ENCODE measurements at regions of chr17 and their contacts with region 1.

Region 1: DNA sequence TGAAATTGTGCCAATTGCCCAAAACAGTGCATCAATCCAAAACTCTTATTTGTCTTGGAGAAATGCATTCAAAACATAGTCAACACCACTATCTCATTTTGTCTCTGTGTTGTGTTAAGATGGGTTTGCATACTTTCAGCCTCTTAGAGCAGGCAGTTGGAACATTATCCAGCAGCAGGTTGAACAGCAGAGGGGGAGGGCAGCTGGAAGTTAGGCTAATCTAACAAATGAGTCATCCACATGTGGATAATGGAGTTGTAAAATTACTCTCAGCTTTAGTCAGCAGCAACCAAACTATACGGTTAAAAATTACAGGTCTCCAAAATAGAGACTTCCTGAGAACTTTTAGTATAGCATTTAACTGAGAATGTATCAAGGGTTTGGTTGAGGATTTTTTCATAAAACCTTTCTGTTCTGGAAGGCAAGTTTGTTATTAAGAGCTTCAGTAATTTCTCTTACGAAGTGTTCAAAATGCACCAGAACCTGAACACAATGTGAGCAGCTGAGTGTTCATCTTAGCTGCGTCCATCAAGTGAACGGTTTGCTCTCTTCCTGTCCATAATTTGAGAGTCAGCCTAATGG is 46.3 kb downstream of the PRKCA start:
- DNase-seq: no peak
- H3K4me3 Mint-ChIP-seq: peak overlapping the region; percentile 62
- H3K27ac Mint-ChIP-seq: peak overlapping the region; percentile 45
- H3K4me1 Mint-ChIP-seq: peaks cover 62% of the 10 kb centered on the region
- H3K27me3 Mint-ChIP-seq: no peaks in the 10 kb centered on the region

Region 2: DNA sequence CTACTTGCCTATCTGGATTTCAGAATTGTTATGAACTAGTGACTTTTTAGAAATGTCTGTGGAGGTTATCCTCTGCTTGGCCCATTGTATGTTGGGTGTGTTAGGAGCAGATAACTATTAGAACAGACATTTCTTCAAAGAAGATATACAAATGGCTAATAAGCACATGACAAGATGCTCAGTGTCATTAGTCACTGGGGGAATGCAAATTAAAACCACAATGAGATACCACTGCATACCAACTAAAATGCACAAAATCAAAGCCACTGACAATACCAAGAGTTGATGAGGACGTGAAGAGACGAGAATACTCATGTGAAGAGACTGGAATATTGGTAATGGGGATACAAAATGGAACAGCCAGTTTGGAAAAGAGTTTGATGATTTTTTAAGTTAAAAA is 195.9 kb before region 1 on chr17:
- intact Hi-C with region 1: no loop called
- DNase-seq: no peak
- H3K4me3 Mint-ChIP-seq: no peak overlapping the region
- H3K27ac Mint-ChIP-seq: no peak overlapping the region
- H3K4me1 Mint-ChIP-seq: peaks cover 12% of the 10 kb centered on the region
- H3K27me3 Mint-ChIP-seq: peaks cover 3% of the 10 kb centered on the region

Region 3: DNA sequence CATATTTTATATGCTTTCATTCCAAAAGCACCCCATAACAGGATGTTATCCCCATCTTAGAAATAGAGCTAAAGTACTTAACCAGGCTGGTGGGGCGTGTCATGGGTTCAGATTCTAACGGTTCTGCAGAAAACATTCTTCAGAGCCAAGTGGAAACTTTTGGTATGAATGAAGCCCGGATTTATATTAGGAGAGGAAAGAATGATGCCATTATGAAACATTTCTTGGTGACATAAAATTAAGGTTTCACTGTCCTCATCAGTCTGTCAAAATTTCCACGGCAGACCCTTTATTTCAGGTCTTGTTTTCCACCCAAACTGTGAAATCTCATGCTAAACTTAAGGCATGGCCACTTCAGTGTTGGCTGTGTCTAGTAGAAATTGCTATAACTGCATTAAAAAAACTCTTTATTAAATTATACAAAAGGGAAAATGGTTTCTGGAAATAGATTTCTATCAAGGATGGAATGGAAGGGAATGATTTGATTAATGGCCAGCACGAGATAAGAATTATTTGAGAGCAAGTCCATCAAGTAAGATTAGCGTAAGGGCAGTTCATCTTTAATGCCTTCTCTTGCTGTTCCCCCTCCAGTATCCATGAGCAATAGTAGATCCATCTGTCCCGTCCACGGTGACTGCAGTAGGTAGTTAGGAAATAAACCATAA is 34.5 kb before region 1 on chr17:
- intact Hi-C with region 1: loop called (anchors 1 kb)
- DNase-seq: no peak
- H3K4me3 Mint-ChIP-seq: no peak overlapping the region
- H3K27ac Mint-ChIP-seq: peak overlapping the region; percentile 80
- H3K4me1 Mint-ChIP-seq: peaks cover 77% of the 10 kb centered on the region
- H3K27me3 Mint-ChIP-seq: no peaks in the 10 kb centered on the region

Region 4: GRCh38 chr17:66331038-66331816 is 17.4 kb before region 1 on chr17:
- intact Hi-C with region 1: loop called (anchors 1 kb)
- DNase-seq: peak; percentile 17
- H3K4me3 Mint-ChIP-seq: peak overlapping the region; percentile 70
- H3K27ac Mint-ChIP-seq: peak overlapping the region; percentile 91
- H3K4me1 Mint-ChIP-seq: peaks cover 68% of the 10 kb centered on the region
- H3K27me3 Mint-ChIP-seq: no peaks in the 10 kb centered on the region

Region 5: GRCh38 chr17:66364990-66365490 is 16.4 kb after region 1 on chr17:
- intact Hi-C with region 1: loop called (anchors 2 kb)
- DNase-seq: no peak
- H3K4me3 Mint-ChIP-seq: peak overlapping the region; percentile 53
- H3K27ac Mint-ChIP-seq: peak overlapping the region; percentile 91
- H3K4me1 Mint-ChIP-seq: peaks cover 83% of the 10 kb centered on the region
- H3K27me3 Mint-ChIP-seq: no peaks in the 10 kb centered on the region

Region 6: DNA sequence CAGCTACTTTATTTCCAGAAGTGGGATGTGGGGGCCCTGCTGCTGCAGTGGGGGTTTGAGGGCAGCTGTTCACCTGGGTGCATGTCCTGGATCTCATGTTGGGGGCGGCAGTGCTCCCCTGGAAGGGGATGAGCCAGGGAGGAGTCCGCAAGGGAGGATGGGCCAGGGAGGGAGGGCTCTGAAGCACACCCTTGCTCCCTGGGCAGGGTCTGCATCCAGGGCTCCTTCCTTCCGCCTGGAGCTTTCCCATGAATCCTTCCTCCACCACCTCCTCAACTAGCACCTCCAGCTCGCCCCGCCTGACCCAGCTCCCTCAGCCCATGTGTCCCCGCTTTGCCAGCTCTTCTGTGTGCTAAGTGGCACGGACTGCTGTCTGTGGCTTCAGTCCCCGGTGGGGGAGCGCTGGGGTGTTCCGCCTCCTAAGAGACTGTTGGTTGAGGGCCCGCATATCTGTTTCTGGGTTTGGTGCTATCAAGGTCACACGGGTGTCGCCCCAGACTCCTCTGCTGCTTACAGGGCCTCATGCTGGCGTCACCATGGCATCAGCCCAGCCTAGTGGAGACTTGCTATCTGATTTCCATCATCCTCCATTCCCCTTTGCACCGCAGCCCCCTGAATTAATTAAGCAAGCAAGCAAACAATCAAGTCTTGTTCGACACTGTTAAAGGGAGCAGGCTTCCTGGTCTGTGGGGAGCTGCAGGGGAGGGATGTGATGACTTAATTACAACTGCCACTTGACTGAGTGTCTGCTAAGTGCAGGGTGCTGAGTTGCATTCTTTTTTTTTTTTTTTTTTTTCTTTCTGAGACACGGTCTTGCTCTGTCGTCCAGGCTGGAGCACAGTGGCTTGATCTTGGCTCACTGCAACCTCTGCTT is 25.5 kb after region 1 on chr17:
- intact Hi-C with region 1: loop called (anchors 1 kb)
- DNase-seq: no peak
- H3K4me3 Mint-ChIP-seq: peak overlapping the region; percentile 30
- H3K27ac Mint-ChIP-seq: peak overlapping the region; percentile 61
- H3K4me1 Mint-ChIP-seq: peaks cover 64% of the 10 kb centered on the region
- H3K27me3 Mint-ChIP-seq: no peaks in the 10 kb centered on the region

Region 7: GRCh38 chr17:66420961-66421371 is 72.3 kb after region 1 on chr17:
- intact Hi-C with region 1: loop called (anchors 5 kb)
- DNase-seq: no peak
- H3K4me3 Mint-ChIP-seq: no peak overlapping the region
- H3K27ac Mint-ChIP-seq: peak overlapping the region; percentile 62
- H3K4me1 Mint-ChIP-seq: peaks cover 62% of the 10 kb centered on the region
- H3K27me3 Mint-ChIP-seq: no peaks in the 10 kb centered on the region

Region 8: GRCh38 chr17:66508896-66509843 is 160.5 kb after region 1 on chr17:
- intact Hi-C with region 1: no loop called
- DNase-seq: peak; percentile 29
- H3K4me3 Mint-ChIP-seq: peak overlapping the region; percentile 77
- H3K27ac Mint-ChIP-seq: peak overlapping the region; percentile 97
- H3K4me1 Mint-ChIP-seq: peaks cover 82% of the 10 kb centered on the region
- H3K27me3 Mint-ChIP-seq: no peaks in the 10 kb centered on the region